Body of pancreas (tissue), 4 donors: ENCODE measurements at regions of chr10 and their contacts with region 1.

Region 1: GRCh38 chr10:97445722-97446639 is at the starts of genes EXOSC1 and ZDHHC16:
- DNase-seq: peak; percentile 87 to 93 (median 90)
- ATAC-seq: peak; percentile 99
- H3K4me3 ChIP-seq: peak within 1 kb of the TSS; percentile 89 to 93
- H3K27ac ChIP-seq: peak within 1 kb of the TSS in 3 of 4 donors; percentile 45 to 75 (median 63)
- H3K4me1 ChIP-seq: peaks cover 34% of the 10 kb centered on the region
- H3K27me3 ChIP-seq: no peaks in the 10 kb centered on the region
- CTCF ChIP-seq: peak in 1 of 7 experiments; percentile 20
- POLR2A ChIP-seq: peak in 2 of 3 donors; percentile 60 to 76
- total RNA-seq, gene EXOSC1: 20.8 to 33.2 TPM
- total RNA-seq, gene ZDHHC16: 17.5 to 18.2 TPM

Region 2: DNA sequence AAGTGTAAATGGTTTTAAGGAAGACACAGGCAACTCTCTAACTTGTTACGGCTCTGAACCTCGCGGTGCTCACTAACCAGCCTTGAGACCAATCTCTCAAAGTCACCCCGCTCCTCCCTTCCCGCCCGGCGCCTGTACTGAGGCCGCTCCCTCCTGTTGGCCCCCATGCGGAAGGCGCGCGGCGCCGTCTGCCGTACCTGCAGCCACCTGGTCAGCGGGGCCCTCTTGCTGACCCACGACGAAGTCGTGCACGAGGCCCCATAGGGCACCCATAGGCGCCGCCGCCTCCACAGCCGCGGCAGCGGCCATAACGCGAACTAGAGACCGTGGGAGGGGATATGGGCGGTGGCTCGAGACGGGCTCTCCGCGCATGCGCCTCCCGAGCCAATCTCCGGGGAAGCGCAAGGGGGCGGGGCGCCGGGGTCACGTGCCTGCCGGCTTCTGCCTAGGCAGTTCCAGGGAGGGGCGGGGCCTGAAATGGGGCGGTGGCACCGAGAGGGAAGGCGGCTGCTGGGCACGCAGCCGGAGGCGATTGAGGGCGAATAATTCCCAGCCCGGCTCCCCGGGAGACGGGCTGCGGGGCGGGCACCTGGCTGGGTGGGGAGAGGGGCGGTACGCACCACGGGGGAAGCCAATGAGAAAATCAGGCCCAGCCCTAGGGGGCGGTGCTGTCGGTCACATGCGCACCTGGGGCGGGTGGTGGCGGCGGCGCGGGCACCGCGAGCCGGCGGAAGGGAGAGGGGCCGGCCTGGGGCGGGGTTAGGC is 52.3 kb after region 1 on chr10 and contains the start of gene MMS19:
- intact Hi-C with region 1: loop called (anchors 5 kb)
- DNase-seq: peak; percentile 100
- ATAC-seq: peak; percentile 89
- H3K4me3 ChIP-seq: peak within 1 kb of the TSS; percentile 70 to 77
- H3K27ac ChIP-seq: peak within 1 kb of the TSS; percentile 78 to 91 (median 88)
- H3K4me1 ChIP-seq: peaks cover 40% of the 10 kb centered on the region
- H3K27me3 ChIP-seq: no peaks in the 10 kb centered on the region
- CTCF ChIP-seq: peak in 2 of 7 experiments; percentile 31 to 36
- POLR2A ChIP-seq: peak; percentile 70 to 88 (median 85)
- total RNA-seq, gene MMS19: 44.6 to 60.0 TPM